Sciatic nerve (tissue), 2 donors: ENCODE measurements at regions of chr12 and their contacts with region 1.

Region 1: GRCh38 chr12:1583421-1584078 is 10.8 kb downstream of the FBXL14 start:
- DNase-seq: peak; percentile 78
- ATAC-seq: peak; percentile 89

Region 2: DNA sequence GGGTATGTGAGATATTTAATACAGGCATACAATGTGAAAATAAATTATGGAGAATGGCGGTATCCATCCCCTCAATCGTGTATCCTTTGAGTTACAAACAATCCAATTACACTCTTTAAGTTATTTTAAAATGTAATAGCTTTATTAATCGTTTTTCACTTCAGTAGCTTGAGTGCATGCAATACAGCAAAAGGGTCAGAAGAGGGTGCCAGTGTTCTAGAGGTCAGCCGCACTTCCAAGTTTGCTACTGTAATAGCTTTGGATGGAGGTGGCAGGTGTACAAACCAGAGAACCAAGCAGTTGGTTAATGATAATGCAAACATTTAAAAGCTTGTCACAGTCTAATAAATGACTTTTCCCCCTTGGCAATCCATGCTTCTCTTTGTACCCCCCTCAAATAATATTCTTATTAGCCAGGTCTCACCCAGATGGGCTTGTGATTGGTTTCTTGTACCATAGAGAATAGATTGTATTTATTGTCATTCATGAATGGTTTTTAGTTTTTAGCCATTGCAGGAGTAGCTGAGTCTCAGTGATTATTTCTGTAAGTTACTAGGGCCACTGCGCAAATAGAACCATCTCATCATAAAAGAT is 465.5 kb before region 1 on chr12:
- intact Hi-C with region 1: loop called (anchors 5 kb)
- DNase-seq: peak; percentile 84
- ATAC-seq: no peak

Region 3: DNA sequence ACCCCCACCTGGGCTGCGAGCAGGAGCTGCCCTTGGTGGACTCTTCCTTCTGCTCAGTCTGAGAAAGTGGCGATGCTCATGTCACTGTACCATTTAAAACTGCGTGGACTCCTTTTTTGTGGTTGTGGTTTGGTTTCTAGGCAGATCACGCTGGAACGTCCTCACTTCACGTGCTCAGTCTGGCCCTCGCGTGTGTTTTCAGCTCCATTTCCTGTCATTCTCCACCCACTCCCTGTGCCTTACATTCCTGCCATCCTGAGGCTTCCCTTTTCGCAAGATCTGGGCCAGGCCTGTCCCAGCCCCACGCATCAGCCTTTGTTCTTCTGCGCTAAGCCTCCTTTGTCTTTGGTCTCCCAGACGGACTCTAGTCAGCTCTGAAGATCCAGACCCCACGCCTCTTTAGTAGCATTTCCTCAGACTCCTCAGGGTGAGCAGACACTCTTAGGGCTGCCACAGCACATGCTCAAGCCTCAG is 94.6 kb before region 1 on chr12:
- intact Hi-C with region 1: no loop called
- DNase-seq: no peak
- ATAC-seq: peak; percentile 64

Region 4: DNA sequence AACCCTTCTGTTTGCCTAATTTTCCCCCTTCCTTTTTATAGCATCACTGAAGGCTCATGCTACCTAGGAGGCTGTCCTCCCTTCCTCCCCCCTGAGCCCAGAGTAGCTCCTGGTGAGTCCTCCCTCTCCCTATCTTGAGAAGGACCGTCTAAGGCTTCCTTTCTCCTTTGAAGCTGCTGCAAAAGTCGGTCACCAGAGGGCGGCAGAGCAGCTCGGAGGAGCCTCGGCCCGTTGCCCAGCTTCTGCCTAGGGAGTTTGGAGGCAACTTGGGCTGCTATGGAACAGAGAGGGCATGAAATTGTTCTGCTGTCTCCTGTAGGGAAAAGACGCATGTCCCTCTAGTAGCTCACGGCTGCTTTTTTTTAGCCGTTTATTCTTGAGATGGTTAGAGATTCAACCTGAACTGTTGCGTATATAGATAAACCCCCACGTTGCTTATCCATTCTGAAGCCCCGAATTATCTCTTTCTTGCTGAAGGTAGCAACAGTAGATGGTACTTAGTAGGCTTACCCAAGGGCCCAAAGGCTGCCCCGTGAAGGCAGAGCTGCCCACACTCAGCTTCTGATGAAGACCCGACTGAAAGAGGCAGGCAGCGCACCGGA is 51.1 kb after region 1 on chr12:
- intact Hi-C with region 1: no loop called
- DNase-seq: peak; percentile 89
- ATAC-seq: peak; percentile 69